AG04450 (cell line): ENCODE measurements at regions of chr7 and their contacts with region 1.

Region 1: GRCh38 chr7:106041140-106041717 is 70.9 kb downstream of the SYPL1 start:
- DNase-seq: no peak
- H3K4me3 ChIP-seq: no peak overlapping the region
- H3K27ac ChIP-seq: no peak overlapping the region
- H3K27me3 ChIP-seq: peaks cover 8% of the 10 kb centered on the region
- CTCF ChIP-seq: peak; percentile 62

Region 2: DNA sequence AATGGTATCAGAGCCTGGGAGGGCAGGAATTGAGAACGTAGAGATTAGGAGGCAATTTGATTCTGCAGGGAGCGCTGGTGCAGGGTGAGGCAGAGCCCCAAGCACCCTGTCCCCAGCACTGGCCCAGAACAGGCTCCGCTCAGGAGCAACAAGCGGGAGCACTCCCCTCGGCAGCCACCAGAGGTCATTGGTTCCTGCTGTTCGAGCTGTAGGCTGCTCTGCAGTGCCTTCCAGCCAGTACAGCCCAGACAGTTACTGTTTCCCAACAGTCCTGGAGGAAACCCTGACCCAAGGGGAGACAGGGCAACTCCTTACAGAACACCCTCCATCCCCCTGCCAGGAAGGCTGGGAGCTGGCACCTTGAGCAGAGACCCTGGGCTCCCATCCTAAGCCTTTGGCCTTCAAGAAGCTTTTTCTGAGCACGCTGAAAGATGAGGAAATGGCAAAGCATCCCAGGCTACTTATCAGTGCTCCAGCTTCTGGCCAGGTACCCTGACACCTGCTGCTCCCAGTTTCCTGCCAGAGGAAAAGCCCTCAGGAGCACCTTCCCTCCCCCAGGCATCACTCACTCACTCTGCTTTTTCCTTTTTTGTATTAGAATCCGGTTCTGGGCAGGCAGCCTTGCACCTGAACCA is 388.8 kb before region 1 on chr7:
- CTCF ChIA-PET with region 1: interaction called, 19 read pairs
- POLR2A ChIA-PET with region 1: no interaction called
- DNase-seq: peak; percentile 55
- H3K4me3 ChIP-seq: no peak overlapping the region
- H3K27ac ChIP-seq: no peak overlapping the region
- H3K27me3 ChIP-seq: no peaks in the 10 kb centered on the region
- CTCF ChIP-seq: peak; percentile 97

Region 3: DNA sequence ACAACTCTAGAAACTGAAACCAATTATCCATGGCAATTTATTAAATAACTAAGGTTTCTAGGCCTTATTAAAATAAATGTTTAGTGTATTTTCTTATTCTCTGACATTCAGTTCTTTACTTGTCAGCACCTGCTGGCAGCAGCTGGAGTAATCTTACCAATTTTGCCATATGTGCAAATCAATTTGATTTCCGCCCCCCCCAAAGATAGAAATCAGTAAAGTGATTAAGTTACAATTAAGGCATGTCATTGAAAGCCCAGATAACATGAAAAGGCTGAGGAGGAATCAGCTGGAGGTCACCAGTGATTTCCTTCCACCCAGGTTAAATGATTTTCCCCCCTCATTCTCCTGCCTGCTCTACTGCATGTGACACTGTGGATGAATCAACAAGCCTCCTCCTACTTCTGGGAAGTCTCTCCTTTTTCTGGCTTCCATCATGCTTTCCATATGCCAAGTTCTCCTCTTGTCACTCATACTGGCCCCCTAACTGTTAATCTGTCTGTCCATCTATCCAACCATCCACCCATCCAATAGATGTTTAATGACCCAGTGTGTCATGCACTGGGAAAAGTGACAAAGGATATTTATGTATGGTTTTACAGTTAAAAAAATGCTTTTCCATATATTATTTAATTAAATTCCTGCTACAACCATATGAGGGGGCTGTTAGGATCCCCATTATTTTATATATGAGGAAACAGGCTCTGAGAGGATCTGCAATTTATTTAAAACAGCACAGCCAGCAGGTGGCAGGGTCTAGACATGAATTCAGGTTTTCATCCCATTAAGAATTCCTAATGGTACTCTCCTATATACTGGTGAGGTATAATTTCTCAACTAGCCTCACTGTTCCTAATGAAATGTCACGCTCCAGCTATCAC is 281.3 kb before region 1 on chr7:
- CTCF ChIA-PET with region 1: interaction called, 38 read pairs
- POLR2A ChIA-PET with region 1: no interaction called
- DNase-seq: no peak
- H3K4me3 ChIP-seq: no peak overlapping the region
- H3K27ac ChIP-seq: no peak overlapping the region
- H3K27me3 ChIP-seq: no peaks in the 10 kb centered on the region
- CTCF ChIP-seq: peak; percentile 62

Region 4: GRCh38 chr7:105818166-105818680 is 223.0 kb before region 1 on chr7:
- CTCF ChIA-PET with region 1: interaction called, 12 read pairs
- POLR2A ChIA-PET with region 1: no interaction called
- DNase-seq: no peak
- H3K4me3 ChIP-seq: no peak overlapping the region
- H3K27ac ChIP-seq: no peak overlapping the region
- H3K27me3 ChIP-seq: no peaks in the 10 kb centered on the region
- CTCF ChIP-seq: no peak

Region 5: DNA sequence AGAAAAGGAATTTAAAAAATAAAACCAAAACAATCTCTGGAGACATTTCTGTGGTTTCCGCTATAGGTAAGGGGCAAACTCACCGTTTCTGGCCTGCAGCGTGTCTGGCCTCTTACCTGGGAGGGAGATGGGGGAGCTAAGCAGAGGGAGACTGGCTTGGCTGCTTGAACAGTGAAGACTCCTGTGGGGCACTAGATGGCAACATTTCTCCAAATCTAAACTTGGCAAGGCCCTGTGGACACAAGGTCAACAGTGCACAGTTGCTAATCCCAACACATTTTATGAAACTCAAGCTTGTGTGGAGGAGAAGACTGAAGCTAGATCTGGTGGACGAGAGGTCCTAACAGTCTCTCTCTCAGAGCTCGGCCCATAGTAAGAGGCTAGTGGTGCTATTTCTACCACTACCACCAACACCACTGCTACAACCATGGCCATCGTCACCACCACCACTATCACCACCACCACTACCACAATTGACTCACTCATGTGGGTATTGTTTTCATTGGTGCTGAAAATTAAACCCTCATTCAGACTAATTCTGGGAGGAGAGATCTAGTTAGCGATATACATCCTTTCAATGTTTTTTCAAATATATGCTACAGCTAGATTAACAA is 106.5 kb before region 1 on chr7:
- CTCF ChIA-PET with region 1: interaction called, 11 read pairs
- POLR2A ChIA-PET with region 1: no interaction called
- DNase-seq: no peak
- H3K4me3 ChIP-seq: no peak overlapping the region
- H3K27ac ChIP-seq: no peak overlapping the region
- H3K27me3 ChIP-seq: no peaks in the 10 kb centered on the region
- CTCF ChIP-seq: peak; percentile 24; the same call in 1 of the 2 replicates

Region 6: DNA sequence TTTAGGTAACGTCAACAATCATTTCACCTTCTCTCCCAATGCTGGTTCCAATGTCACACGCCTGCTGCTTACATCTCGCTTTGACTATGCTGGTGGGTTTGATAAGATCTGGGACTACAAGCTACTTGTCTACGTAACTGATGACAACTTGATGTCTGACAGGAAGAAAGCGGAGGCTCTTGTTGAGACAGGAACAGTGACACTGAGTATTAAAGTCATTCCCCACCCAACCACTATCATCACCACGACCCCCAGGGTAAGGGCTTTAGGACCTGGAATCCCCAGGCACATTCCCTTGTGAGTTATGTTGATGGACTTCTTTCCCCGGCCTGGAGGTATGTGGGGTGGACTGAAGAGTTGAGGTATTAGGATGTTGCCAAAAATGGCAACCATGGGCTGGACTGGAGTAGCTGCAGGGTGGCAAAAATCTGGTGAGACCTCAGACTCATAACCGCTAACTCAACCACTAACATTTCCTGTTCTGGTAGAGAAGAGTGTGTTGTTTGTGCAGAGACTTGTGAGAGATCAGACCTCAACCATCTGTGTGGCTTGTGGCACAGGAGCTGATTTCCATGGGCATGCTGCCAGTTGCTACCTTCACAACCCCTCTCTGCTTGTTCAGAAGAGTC is 18.9 kb before region 1 on chr7:
- CTCF ChIA-PET with region 1: no interaction called
- POLR2A ChIA-PET with region 1: no interaction called
- DNase-seq: no peak
- H3K4me3 ChIP-seq: no peak overlapping the region
- H3K27ac ChIP-seq: no peak overlapping the region
- H3K27me3 ChIP-seq: no peaks in the 10 kb centered on the region
- CTCF ChIP-seq: no peak

Region 7: DNA sequence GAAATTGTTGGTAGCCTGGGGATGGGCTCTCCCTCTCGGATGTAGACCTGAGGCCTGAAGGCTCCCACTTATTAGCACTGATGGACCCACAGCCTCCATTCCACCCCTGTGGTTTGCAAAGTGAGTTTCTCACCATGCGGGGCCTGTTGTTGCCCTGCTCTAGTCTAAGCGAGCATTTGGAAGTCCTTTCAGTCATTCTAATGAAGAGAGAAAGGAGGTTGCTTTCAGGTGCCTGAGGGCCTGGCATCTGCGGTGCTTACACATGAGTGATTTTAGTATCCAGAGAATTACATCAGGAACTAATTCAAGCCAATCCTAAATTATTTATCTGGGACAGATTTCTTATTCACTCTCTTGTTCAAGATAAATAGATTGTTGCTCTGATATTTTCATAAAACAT is 181.9 kb after region 1 on chr7:
- CTCF ChIA-PET with region 1: no interaction called
- POLR2A ChIA-PET with region 1: no interaction called
- DNase-seq: no peak
- H3K4me3 ChIP-seq: no peak overlapping the region
- H3K27ac ChIP-seq: no peak overlapping the region
- H3K27me3 ChIP-seq: peaks cover 3% of the 10 kb centered on the region
- CTCF ChIP-seq: no peak